Dorsolateral prefrontal cortex (tissue), 120 donors: ENCODE measurements at regions of chr17 and their contacts with region 1.

Region 1: GRCh38 chr17:61412143-61412859 is 12.7 kb downstream of the TBX2 start:
- DNase-seq: peak; percentile 56 to 90 (median 67)
- H3K4me3 ChIP-seq: peak overlapping the region; percentile 32 to 78 (median 63)
- H3K27ac ChIP-seq: peak overlapping the region in 49 of 59 donors; percentile 15 to 86 (median 63)
- H3K27me3 ChIP-seq: peaks cover 4 to 60% (median 40%) of the 10 kb centered on the region in 45 donors
- CTCF ChIP-seq: peak; percentile 64 to 100 (median 97)

Region 2: DNA sequence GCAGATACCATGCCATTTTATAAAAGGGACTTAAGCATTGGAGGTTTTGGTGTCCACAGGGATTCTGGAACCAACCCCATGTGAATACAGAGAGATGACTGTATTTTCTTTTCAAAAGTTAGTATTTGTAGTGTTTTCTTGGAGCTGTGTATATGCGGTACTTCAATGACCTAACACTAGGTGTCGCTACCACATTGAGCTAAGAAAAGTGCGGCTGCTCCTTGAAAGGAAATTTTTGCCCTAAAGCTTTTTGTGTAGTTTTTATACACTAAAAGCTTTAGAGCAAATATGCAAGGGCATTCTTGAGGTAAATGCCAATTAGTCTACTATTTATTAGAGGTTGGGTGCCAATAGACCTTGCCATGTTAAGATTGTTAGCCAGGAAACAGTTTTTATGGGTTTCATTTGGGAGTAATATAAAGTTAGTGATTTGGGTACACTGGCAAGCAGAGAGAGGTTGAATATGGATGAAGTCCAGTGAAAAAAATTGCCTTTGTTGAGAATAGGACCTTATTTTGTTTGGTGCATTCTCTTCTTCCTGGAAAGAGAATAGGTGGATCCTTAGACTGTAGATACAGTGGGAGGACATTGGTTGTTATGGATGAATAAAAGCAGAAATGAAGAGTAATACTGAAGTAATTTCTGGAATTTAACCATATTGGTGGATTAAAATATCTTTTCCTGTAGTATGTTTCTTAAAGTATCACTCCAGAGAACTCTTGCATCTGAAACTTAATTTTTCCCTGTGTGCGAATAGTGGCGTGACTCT is 691.4 kb before region 1 on chr17:
- intact Hi-C with region 1: loop called in 1 of 2 experiments (anchors 5 kb)
- DNase-seq: peak in 3 of 10 donors; percentile 8 to 22 (median 20)
- H3K4me3 ChIP-seq: no peak overlapping the region
- H3K27ac ChIP-seq: peak overlapping the region in 4 of 59 donors; percentile 21 to 49 (median 34)
- H3K27me3 ChIP-seq: no peaks in the 10 kb centered on the region
- CTCF ChIP-seq: peak; percentile 87 to 98 (median 93)

Region 3: DNA sequence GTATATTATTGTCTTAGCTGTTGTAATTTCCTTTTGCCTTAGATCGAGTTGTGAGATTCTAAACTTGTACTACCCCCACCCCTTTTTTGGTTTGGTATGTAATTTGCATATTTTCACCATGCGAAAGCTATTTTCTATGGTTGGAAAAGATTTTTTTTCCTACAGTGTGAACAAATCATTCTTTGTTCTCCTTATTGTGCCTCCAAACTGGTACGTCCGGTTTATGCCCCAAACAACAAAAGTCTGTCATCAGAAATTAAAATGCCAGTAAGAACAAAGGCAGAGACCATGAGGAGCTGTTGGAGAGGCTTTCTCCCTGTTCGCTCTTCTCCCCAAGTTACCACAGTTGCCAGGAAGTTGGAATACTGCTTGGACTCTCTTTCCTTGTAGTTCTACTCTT is 668.5 kb before region 1 on chr17:
- intact Hi-C with region 1: loop called in 1 of 2 experiments (anchors 2 kb)
- DNase-seq: peak in 1 of 10 donors; percentile 21
- H3K4me3 ChIP-seq: peak overlapping the region in 53 of 59 donors; percentile 1 to 59 (median 30)
- H3K27ac ChIP-seq: peak overlapping the region; percentile 15 to 94 (median 81)
- H3K27me3 ChIP-seq: no peaks in the 10 kb centered on the region
- CTCF ChIP-seq: peak in 8 of 56 donors; percentile 7 to 40 (median 22)

Region 4: DNA sequence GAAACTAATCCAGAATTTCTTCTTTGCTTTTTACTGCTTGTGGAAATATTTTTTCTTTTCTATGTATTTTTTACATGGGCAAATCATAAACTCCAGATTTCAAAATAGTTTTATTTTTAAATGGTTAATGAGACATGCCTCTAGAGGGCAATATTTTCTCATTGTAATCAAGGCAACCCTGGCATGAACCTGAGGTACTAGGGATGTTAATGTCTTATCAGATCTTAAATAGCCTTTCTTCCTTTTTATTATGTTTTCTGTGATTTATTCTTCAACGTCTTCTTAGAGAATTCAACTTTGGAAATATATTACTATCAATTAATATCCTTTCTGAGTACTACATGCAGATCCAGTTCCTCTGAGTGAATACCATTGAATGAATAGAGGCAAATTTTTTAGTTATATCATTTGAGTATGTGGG is 410.0 kb before region 1 on chr17:
- intact Hi-C with region 1: loop called in 1 of 2 experiments (anchors 5 kb)
- DNase-seq: no peak
- H3K4me3 ChIP-seq: no peak overlapping the region
- H3K27ac ChIP-seq: no peak overlapping the region
- H3K27me3 ChIP-seq: no peaks in the 10 kb centered on the region
- CTCF ChIP-seq: peak; percentile 40 to 84 (median 66)

Region 5: DNA sequence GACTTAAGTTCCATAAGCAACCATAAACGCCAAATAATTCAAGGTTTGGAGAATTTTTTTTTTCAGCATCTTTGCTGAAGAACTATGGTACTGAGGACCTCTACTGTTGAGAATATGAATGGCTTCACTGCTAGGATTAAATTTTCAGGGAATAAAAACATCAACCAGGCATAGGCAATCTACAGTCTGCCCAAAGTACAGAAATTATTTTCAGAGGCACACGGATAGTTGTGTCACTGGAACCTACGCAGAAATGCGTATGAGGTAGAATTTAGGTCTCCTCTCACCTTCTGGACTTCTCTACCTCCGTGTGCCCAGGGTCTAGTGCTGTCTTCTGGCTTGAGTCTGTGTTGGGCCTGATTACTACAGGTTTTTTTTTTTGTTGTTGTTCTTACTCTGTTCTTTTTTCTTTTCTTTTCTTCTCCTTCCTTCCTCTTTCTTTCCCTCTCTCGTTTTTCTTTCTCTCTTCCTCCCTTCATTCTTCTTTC is 139.0 kb after region 1 on chr17:
- intact Hi-C with region 1: loop called (anchors 2 kb)
- DNase-seq: no peak
- H3K4me3 ChIP-seq: no peak overlapping the region
- H3K27ac ChIP-seq: no peak overlapping the region
- H3K27me3 ChIP-seq: peaks cover 0 to 33% (median 4%) of the 10 kb centered on the region in 45 donors
- CTCF ChIP-seq: peak; percentile 30 to 81 (median 62)

Region 6: GRCh38 chr17:61837175-61838051 is 425.1 kb after region 1 on chr17:
- intact Hi-C with region 1: loop called (anchors 10 kb)
- DNase-seq: peak in 3 of 10 donors; percentile 9 to 33 (median 16)
- H3K4me3 ChIP-seq: no peak overlapping the region
- H3K27ac ChIP-seq: no peak overlapping the region
- H3K27me3 ChIP-seq: no peaks in the 10 kb centered on the region
- CTCF ChIP-seq: peak in 55 of 56 donors; percentile 13 to 71 (median 51)

Region 7: GRCh38 chr17:62065598-62066468 is 653.5 kb after region 1 on chr17:
- intact Hi-C with region 1: loop called (anchors 2 kb)
- DNase-seq: peak; percentile 97 to 99 (median 98)
- H3K4me3 ChIP-seq: peak overlapping the region; percentile 60 to 99 (median 93)
- H3K27ac ChIP-seq: peak overlapping the region; percentile 90 to 100 (median 99)
- H3K27me3 ChIP-seq: no peaks in the 10 kb centered on the region
- CTCF ChIP-seq: peak; percentile 85 to 99 (median 94)